ENCODE measurements at regions of chr7 and their contacts with region 1.

Region 1: GRCh38 chr7:50304158-50304910 is at the start of gene IKZF1:
- DNase-seq: peak; percentile 82
- ATAC-seq: peak; percentile 21
- H3K4me3 Mint-ChIP-seq: peak within 1 kb of the TSS; percentile 95
- H3K27ac Mint-ChIP-seq: peak within 1 kb of the TSS; percentile 100
- H3K4me1 Mint-ChIP-seq: peaks cover 40% of the 10 kb centered on the region
- H3K27me3 Mint-ChIP-seq: no peaks in the 10 kb centered on the region
- total RNA-seq, gene IKZF1: 245 to 260 TPM

Region 2: GRCh38 chr7:50147951-50148808 is 156.2 kb before region 1 on chr7:
- CTCF ChIA-PET with region 1: interaction called, 5 read pairs
- POLR2A ChIA-PET with region 1: no interaction called
- intact Hi-C with region 1: loop called in 1 of 2 experiments (anchors 5 kb)
- DNase-seq: peak; percentile 65
- ATAC-seq: peak; percentile 89
- H3K4me3 Mint-ChIP-seq: peak overlapping the region; percentile 40
- H3K27ac Mint-ChIP-seq: peak overlapping the region; percentile 90
- H3K4me1 Mint-ChIP-seq: peaks cover 85% of the 10 kb centered on the region
- H3K27me3 Mint-ChIP-seq: no peaks in the 10 kb centered on the region

Region 3: DNA sequence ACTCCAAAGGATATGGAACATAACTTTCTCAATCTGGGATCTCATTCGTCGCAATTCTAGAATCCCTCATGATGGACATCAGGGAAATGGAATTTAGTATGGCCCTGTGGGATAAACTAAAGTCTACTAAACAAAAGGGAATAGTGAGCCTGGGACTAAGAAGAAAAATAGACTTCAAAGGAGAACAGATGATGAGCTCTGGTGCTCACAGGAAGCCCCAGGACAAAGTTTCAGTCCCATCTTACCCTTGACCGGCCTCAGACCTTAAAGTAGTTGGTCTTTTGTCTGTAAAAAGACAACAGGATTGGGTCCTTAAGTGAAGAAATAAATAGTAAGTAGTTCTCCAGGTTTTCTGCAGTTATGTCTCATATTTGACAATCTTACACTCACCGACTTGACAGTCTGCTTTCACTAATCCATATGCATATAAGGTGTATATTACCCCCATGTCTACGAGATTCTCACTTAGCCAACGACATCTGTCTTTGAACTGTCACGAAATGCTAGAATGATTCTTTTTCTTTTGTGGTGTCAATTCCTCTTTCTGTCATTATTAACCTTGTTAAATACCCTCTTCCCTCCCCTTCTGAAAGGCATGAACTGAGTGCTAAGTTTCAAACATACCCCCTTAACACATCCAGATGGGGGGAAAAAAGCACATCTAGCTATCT is 10.7 kb before region 1 on chr7:
- CTCF ChIA-PET with region 1: interaction called, 9 read pairs
- POLR2A ChIA-PET with region 1: no interaction called
- intact Hi-C with region 1: loop called in 1 of 2 experiments (anchors 2 kb)
- DNase-seq: no peak
- ATAC-seq: no peak
- H3K4me3 Mint-ChIP-seq: no peak overlapping the region
- H3K27ac Mint-ChIP-seq: no peak overlapping the region
- H3K4me1 Mint-ChIP-seq: peaks cover 32% of the 10 kb centered on the region
- H3K27me3 Mint-ChIP-seq: no peaks in the 10 kb centered on the region

Region 4: GRCh38 chr7:50335795-50336754 is 31.7 kb after region 1 on chr7:
- CTCF ChIA-PET with region 1: interaction called, 52 read pairs
- POLR2A ChIA-PET with region 1: interaction called, 7 read pairs
- intact Hi-C with region 1: loop called in 1 of 2 experiments (anchors 2 kb)
- DNase-seq: peak; percentile 93
- ATAC-seq: peak; percentile 34
- H3K4me3 Mint-ChIP-seq: no peak overlapping the region
- H3K27ac Mint-ChIP-seq: no peak overlapping the region
- H3K4me1 Mint-ChIP-seq: peaks cover 2% of the 10 kb centered on the region
- H3K27me3 Mint-ChIP-seq: no peaks in the 10 kb centered on the region

Region 5: GRCh38 chr7:50359995-50360925 is 55.9 kb after region 1 on chr7:
- CTCF ChIA-PET with region 1: interaction called, 4 read pairs
- POLR2A ChIA-PET with region 1: interaction called, 6 read pairs
- intact Hi-C with region 1: loop called in 1 of 2 experiments (anchors 2 kb)
- DNase-seq: peak; percentile 89
- ATAC-seq: peak; percentile 77
- H3K4me3 Mint-ChIP-seq: peak overlapping the region; percentile 67
- H3K27ac Mint-ChIP-seq: peak overlapping the region; percentile 99
- H3K4me1 Mint-ChIP-seq: peaks cover 97% of the 10 kb centered on the region
- H3K27me3 Mint-ChIP-seq: no peaks in the 10 kb centered on the region

Region 6: DNA sequence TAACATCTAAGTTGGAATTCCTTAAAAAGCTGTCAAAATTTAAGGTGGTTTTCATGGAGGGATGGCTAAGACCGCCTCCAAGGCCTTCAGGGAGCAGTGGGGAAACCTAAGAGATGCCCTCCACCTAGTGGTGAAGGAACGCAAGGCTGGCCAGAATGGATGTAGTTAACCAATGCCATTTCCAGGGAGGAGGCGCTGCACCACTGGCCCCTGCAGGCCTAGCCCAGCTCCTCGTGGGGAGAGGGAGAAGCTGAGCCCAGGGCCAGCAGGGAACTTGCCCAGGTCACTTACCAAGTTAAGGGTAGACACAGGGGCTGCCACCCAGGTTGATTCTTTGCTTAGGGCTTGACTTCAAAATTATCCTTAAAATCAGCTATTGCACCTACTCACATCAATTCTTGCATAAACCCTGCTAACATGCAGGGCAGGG is 113.8 kb after region 1 on chr7:
- CTCF ChIA-PET with region 1: interaction called, 3 read pairs
- POLR2A ChIA-PET with region 1: interaction called, 4 read pairs
- intact Hi-C with region 1: loop called in 1 of 2 experiments (anchors 2 kb)
- DNase-seq: peak; percentile 89
- ATAC-seq: peak; percentile 96
- H3K4me3 Mint-ChIP-seq: no peak overlapping the region
- H3K27ac Mint-ChIP-seq: no peak overlapping the region
- H3K4me1 Mint-ChIP-seq: peaks cover 24% of the 10 kb centered on the region
- H3K27me3 Mint-ChIP-seq: no peaks in the 10 kb centered on the region

Measured in activated CD4-positive, alpha-beta T cell treated with anti-CD3 and anti-CD28 coated beads for 36 hours (primary cell).